ENCODE measurements at regions of chr11 and their contacts with region 1.

Region 1: DNA sequence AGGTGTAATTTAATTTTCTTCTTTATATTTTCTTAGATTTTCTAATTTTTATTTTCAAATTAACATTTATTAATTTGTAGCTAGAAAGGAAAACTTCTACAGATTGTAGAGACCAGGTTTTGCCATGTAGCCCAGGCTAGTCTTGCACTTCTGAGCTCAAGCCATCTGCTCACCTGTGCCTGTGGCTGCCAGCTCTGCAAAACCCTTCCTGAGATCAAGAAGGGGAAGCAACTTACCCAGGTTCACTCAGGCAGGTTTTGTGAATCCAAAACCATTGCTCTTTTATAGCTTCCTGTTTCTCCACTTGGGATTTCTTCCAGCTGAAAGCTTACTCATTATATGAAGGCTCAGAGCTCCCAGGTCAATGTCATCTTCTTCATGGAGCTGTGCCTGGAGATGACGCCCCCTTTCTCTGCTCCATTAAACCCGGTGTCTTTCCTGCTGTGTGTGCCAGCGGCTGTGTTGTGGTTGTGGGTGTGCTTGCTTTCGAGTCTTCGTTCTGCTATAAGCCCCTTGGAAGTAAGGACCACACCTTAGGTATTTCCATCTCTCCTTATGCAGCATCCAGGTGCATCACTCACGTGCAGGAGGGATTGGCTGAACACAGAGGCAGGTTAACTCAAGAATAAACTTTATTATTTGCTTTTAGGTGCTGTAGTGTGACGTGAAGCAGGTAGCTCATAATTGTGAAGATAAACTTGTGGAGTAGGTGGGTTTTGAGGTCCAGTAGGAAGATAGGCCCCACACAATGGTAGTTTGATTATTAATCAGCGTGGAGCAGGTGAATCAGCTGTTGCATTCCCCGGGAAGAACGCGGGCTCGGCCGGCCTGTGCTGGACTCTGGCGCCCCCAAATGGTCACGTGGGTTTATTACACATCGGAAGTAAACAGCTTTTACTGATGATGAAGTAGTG is 42.2 kb upstream of the INCENP start:
- DNase-seq: peak; percentile 21 to 89
- H3K4me3 ChIP-seq: peak overlapping the region in 1 of 2 donors; percentile 5
- H3K27ac ChIP-seq: no peak overlapping the region
- H3K4me1 ChIP-seq: no peaks in the 10 kb centered on the region
- H3K27me3 ChIP-seq: no peaks in the 10 kb centered on the region
- CTCF ChIP-seq: peak; percentile 90 to 94 (median 93)

Region 2: DNA sequence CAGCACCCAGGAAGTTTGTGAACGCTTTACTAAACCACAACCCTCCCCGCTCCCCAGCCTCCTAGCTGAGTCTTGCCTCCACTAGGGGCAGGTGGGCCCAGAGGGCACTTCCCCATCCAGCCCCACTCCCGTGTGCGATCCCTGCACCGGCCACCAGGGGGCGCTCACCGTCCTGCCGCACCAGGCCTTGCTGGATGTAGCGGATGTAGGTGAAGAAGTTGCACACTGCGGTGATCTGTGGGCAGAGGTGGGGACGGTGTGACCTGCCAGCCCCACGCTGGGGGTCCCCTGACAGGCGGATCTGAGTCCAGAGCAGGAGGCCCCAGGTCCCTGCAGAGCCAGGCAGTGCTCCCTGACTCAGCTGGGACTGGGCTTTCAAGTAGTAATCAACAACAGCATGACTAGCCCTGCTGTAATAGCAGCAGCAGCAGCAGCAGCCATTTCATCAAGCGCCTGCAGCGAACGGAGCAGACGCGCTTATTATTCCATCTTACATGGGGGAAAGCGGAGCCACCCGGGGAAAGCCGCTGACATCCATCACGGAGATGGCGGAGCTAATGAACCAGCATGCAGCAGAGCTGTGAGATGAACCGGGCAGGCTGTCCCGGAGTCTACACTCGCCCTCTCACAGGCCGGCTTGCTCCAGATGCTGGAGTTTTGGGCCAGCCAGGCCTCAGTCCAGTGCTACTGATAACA is 182.3 kb before region 1 on chr11:
- intact Hi-C with region 1: loop called (anchors 1 kb)
- DNase-seq: peak in 1 of 2 donors; percentile 91
- H3K4me3 ChIP-seq: no peak overlapping the region
- H3K27ac ChIP-seq: peak overlapping the region in 1 of 2 donors; percentile 30
- H3K4me1 ChIP-seq: no peaks in the 10 kb centered on the region
- H3K27me3 ChIP-seq: no peaks in the 10 kb centered on the region
- CTCF ChIP-seq: peak; percentile 99 to 100 (median 99)

Region 3: DNA sequence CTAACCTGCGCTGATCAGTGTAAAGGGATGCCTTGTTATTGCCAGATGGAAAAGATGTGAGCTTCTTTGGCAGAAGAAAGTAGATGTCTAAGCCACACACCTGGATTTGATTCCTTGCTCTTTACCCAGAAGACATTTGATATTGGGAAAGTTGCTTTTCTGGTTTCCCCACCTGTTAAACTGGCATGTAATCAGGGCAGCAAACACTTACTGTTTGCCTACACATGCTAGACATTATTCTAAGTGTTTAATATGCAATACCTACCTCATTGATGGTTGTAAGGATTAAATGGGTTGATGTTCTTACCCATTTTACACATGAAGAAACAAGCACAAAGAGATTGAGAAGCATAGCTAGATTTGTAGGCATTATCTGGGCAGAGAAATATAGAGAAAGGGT is 272.2 kb after region 1 on chr11:
- intact Hi-C with region 1: no loop called
- DNase-seq: no peak
- H3K4me3 ChIP-seq: no peak overlapping the region
- H3K27ac ChIP-seq: no peak overlapping the region
- H3K4me1 ChIP-seq: no peaks in the 10 kb centered on the region
- H3K27me3 ChIP-seq: no peaks in the 10 kb centered on the region
- CTCF ChIP-seq: no peak

Measured in ascending aorta (tissue), 2 donors.